WTC11 (cell line): ENCODE measurements at regions of chr12 and their contacts with region 1.

Region 1: GRCh38 chr12:44972746-44973421 is 78.0 kb downstream of the DBX2 start:
- DNase-seq: peak; percentile 49
- ATAC-seq: peak; percentile 100
- H3K4me3 Mint-ChIP-seq: no peak overlapping the region
- H3K27ac Mint-ChIP-seq: no peak overlapping the region
- H3K4me1 Mint-ChIP-seq: peaks cover 4% of the 10 kb centered on the region
- H3K27me3 Mint-ChIP-seq: no peaks in the 10 kb centered on the region
- CTCF ChIP-seq: peak; percentile 43; the same call in 1 of the 2 replicates

Region 2: GRCh38 chr12:44960856-44961255 is 12.0 kb before region 1 on chr12:
- CTCF ChIA-PET with region 1: interaction called, 28 read pairs
- POLR2A ChIA-PET with region 1: no interaction called
- DNase-seq: peak; percentile 64
- ATAC-seq: peak; percentile 100
- H3K4me3 Mint-ChIP-seq: no peak overlapping the region
- H3K27ac Mint-ChIP-seq: no peak overlapping the region
- H3K4me1 Mint-ChIP-seq: peaks cover 19% of the 10 kb centered on the region
- H3K27me3 Mint-ChIP-seq: no peaks in the 10 kb centered on the region
- CTCF ChIP-seq: no peak

Region 3: GRCh38 chr12:45050751-45051571 is 78.1 kb after region 1 on chr12 and contains the start of gene DBX2:
- CTCF ChIA-PET with region 1: interaction called, 10 read pairs
- POLR2A ChIA-PET with region 1: no interaction called
- DNase-seq: peak; percentile 23
- ATAC-seq: peak; percentile 75
- H3K4me3 Mint-ChIP-seq: peak within 1 kb of the TSS; percentile 88
- H3K27ac Mint-ChIP-seq: no peak within 1 kb of the TSS
- H3K4me1 Mint-ChIP-seq: peaks cover 19% of the 10 kb centered on the region
- H3K27me3 Mint-ChIP-seq: peaks cover 47% of the 10 kb centered on the region
- CTCF ChIP-seq: no peak
- total RNA-seq, gene DBX2: 0.27 to 0.35 TPM (median 0.27 TPM) in 3 replicates

Region 4: DNA sequence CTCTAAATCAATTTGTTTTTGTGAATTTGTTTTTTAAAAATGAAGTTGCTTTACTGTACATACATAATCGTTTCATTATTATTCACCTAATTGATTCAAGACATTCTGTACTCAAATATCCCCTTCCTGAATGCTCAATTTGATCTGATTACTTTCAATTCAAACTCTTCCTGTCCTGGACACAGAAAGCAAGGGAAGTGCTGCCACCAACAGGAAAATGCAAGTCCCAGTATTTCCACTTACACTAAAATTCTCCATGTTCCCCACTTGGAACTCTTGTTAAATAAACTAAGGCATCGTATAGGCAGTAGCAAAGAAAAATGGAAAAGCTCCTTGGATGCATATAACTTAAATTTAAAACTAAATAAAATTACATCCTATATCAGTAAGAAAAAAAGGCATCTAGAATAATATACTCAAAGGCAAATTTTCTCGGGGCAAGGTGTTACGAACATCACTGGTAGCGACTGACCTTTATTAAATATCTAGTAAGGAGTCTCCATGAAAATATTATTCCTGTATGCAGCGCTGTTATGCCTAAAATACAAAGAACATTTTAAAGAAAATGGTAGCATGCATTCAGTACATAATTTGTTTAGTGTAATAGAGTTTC is 150.0 kb after region 1 on chr12:
- CTCF ChIA-PET with region 1: interaction called, 30 read pairs
- POLR2A ChIA-PET with region 1: no interaction called
- DNase-seq: peak; percentile 22
- ATAC-seq: peak; percentile 67
- H3K4me3 Mint-ChIP-seq: no peak overlapping the region
- H3K27ac Mint-ChIP-seq: no peak overlapping the region
- H3K4me1 Mint-ChIP-seq: peaks cover 13% of the 10 kb centered on the region
- H3K27me3 Mint-ChIP-seq: no peaks in the 10 kb centered on the region
- CTCF ChIP-seq: no peak

Region 5: GRCh38 chr12:45232745-45233372 is 260.0 kb after region 1 on chr12:
- CTCF ChIA-PET with region 1: no interaction called
- POLR2A ChIA-PET with region 1: no interaction called
- DNase-seq: peak; percentile 29
- ATAC-seq: peak; percentile 77
- H3K4me3 Mint-ChIP-seq: peak overlapping the region; percentile 29
- H3K27ac Mint-ChIP-seq: peak overlapping the region; percentile 98
- H3K4me1 Mint-ChIP-seq: peaks cover 73% of the 10 kb centered on the region
- H3K27me3 Mint-ChIP-seq: no peaks in the 10 kb centered on the region
- CTCF ChIP-seq: no peak